Heart left ventricle (tissue), 16 donors: ENCODE measurements at regions of chr10 and their contacts with region 1.

Region 1: DNA sequence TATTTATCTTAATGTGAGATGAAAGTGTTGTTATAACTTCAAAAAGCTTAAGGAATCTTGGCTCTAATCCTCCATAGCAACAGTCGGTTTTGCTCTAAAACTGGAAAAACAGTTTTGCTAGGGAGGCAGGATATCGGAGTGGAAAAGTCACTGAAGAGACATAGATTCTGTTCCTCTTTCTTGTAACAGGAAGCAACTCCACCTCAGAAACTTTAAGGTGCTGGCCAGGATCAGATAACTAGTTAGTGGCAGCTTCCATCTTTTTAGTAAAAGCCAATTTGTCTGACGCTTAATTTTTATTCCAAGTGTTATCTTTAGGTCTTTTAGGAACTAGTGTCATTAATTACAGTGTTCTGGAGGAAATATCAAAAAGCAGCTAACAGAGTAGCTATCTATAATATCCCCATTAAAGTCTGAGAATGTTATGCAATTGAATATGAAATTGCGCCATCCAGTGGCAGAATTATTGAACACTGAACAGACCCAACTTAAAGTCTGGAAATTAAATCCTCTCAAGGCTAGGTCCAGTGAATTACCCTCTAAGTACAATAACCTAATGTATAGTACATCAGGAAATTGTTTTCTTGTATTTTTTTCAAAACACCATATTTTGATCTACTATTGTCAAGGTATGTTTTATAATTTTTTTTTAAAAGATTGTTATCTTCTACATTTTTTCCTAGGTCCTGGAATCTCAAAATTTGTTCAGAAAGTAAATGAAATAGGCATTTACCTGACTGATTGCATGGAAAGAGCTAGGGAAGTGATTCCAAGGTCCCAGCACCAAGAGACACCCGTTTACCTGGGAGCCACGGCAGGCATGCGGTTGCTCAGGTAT is 65.9 kb upstream of the CC2D2B start:
- DNase-seq: peak in 2 of 5 donors; percentile 40 to 49
- ATAC-seq: peak; percentile 57 to 89 (median 70)
- H3K4me3 ChIP-seq: no peak overlapping the region
- H3K27ac ChIP-seq: peak overlapping the region in 11 of 12 donors; percentile 5 to 83 (median 56)
- H3K4me1 ChIP-seq: peaks cover 0 to 41% (median 8%) of the 10 kb centered on the region in 12 donors
- H3K27me3 ChIP-seq: no peaks in the 10 kb centered on the region
- CTCF ChIP-seq: peak; percentile 58 to 80 (median 67)
- POLR2A ChIP-seq: no peak

Region 2: DNA sequence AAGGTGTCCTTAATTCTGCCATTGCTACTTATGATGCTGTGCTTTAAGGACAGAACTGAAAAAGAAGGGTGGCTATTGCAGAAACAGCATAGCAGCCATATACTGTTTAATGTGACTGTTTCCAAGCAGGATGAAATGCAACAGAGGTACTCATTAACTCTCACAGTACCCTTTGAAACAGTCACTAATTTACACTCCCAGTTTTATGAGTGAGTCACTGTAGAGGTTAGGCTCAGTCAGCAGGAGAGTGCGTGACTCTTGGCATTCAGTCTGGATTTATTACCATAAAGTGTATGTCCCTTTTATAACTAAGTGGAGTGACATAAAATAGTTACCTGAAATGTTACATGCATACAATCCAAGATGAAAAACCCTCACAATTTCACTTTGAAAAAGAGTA is 213.1 kb before region 1 on chr10:
- intact Hi-C with region 1: no loop called
- DNase-seq: no peak
- ATAC-seq: no peak
- H3K4me3 ChIP-seq: no peak overlapping the region
- H3K27ac ChIP-seq: no peak overlapping the region
- H3K4me1 ChIP-seq: no peaks in the 10 kb centered on the region
- H3K27me3 ChIP-seq: no peaks in the 10 kb centered on the region
- CTCF ChIP-seq: no peak
- POLR2A ChIP-seq: no peak

Region 3: DNA sequence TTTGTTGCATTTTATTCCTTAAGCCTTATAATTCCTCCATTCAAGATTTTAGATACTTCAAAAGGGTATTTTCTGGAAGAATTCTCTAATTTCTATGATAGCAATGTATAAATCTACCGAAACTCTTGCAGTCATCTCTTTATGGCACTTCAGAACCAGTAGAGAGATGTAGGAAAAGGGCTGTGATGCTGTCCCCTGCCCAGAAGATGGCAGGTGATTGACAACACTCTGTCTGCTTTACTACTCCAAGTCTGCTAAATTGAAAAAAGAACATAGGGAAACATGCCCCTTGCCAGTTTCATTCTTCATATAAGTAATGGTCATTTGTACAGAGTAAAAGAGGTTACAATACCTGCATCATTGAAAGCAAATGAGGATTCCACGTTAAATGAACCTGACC is 153.2 kb before region 1 on chr10:
- intact Hi-C with region 1: loop called in 3 of 10 experiments (anchors 1 to 5 kb)
- DNase-seq: no peak
- ATAC-seq: no peak
- H3K4me3 ChIP-seq: no peak overlapping the region
- H3K27ac ChIP-seq: no peak overlapping the region
- H3K4me1 ChIP-seq: peaks cover 0 to 25% (median 16%) of the 10 kb centered on the region in 12 donors
- H3K27me3 ChIP-seq: no peaks in the 10 kb centered on the region
- CTCF ChIP-seq: no peak
- POLR2A ChIP-seq: no peak

Region 4: DNA sequence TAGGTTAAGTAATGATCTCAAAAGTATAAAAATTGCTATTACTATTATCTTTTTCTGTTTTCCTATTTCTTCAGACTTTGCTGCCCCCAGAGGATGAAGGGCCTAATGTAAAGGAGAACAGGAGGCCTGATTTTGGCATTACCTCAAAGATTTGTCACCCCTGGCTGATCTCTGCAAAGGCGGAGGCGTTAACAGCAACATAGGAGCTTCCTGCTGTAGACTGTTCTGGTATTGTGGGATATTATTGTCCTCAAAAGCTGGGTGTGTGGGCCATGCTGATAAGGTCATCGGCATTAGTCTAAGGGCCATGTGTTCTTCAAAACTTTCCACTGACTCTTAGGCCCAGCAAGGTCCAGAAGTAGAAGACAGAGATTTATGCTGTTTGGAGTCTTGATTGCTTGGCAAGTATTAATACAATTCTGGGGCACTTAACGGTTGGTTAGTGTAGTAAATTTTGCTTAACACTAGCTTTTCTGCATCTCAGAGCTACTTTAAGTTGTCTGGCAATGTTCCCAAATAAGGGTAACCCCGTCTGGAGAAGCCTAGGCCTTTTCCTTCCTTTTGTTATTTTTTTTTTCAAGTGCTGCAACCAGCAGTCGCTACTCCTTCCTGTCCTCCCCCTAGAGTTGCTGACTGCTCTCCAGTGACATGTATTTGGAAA is 99.9 kb before region 1 on chr10:
- intact Hi-C with region 1: loop called in 2 of 10 experiments (anchors 1 to 5 kb)
- DNase-seq: peak in 4 of 5 donors; percentile 37 to 73 (median 51)
- ATAC-seq: peak; percentile 93 to 98 (median 96)
- H3K4me3 ChIP-seq: no peak overlapping the region
- H3K27ac ChIP-seq: peak overlapping the region; percentile 64 to 88 (median 75)
- H3K4me1 ChIP-seq: peaks cover 0 to 36% (median 13%) of the 10 kb centered on the region in 12 donors
- H3K27me3 ChIP-seq: no peaks in the 10 kb centered on the region
- CTCF ChIP-seq: peak in 8 of 12 donors; percentile 8 to 46 (median 24)
- POLR2A ChIP-seq: no peak

Region 5: GRCh38 chr10:95755511-95756004 is 86.3 kb before region 1 on chr10:
- intact Hi-C with region 1: loop called in 1 of 10 experiments (anchors 5 kb)
- DNase-seq: peak in 4 of 5 donors; percentile 47 to 61 (median 52)
- ATAC-seq: peak; percentile 35 to 81 (median 70)
- H3K4me3 ChIP-seq: peak overlapping the region in 11 of 12 donors; percentile 11 to 63 (median 49)
- H3K27ac ChIP-seq: peak overlapping the region in 11 of 12 donors; percentile 22 to 83 (median 68)
- H3K4me1 ChIP-seq: peaks cover 0 to 33% (median 1%) of the 10 kb centered on the region in 12 donors
- H3K27me3 ChIP-seq: no peaks in the 10 kb centered on the region
- CTCF ChIP-seq: peak in 1 of 12 donors; percentile 7
- POLR2A ChIP-seq: peak in 1 of 2 donors; percentile 29

Region 6: DNA sequence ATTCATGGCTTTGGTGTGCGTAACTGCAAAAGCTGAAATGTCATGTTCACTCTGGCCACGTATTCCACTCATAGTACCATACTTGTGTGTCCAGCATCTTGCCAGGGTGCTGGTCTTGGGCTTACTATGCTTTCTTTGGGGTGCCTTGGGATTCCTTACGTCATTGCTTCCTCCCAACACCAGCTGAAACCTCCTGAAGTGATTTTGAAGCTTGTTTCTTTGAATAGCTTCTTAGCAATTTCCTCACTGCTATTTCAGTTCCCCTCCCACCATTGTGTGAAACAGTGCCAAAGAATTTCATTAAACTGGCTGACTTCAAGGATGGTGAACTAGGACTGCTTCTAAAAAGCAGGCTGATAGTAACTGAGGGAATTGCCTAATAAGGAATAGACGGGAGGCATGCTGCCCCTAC is 49.0 kb before region 1 on chr10:
- intact Hi-C with region 1: no loop called
- DNase-seq: peak in 2 of 5 donors; percentile 44 to 50
- ATAC-seq: peak; percentile 66 to 93 (median 85)
- H3K4me3 ChIP-seq: no peak overlapping the region
- H3K27ac ChIP-seq: peak overlapping the region in 11 of 12 donors; percentile 48 to 92 (median 78)
- H3K4me1 ChIP-seq: peaks cover 0 to 61% (median 22%) of the 10 kb centered on the region in 12 donors
- H3K27me3 ChIP-seq: no peaks in the 10 kb centered on the region
- CTCF ChIP-seq: no peak
- POLR2A ChIP-seq: no peak